Naive thymus-derived CD4-positive, alpha-beta T cell (primary cell): ENCODE measurements at regions of chr10 and their contacts with region 1.

Region 1: DNA sequence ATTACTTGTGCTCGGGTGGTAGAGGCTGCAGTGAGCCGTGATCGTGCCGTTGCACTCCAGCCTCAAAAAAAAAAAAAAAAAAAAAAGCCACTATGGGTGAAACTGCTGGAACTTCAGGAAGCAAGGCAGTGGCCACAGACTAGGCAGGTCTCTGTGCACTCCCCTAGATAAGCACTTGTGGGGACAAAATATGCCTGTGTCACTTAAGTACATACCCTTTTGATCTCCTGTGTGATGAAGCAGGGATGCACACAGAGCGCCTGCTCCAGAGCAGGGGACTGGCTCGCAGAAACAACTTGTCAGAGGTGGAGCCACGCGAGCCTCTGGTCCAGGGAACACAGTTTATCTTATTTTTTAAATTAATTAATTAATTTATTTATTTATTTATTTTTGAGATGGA is 42.9 kb upstream of the PSAP start:
- DNase-seq: no peak
- ATAC-seq: no peak
- H3K4me3 ChIP-seq: no peak overlapping the region
- H3K4me3 Mint-ChIP-seq: no peak overlapping the region
- H3K27ac ChIP-seq: no peak overlapping the region
- H3K27ac Mint-ChIP-seq: peak overlapping the region in 1 of 9 donors; percentile 78
- H3K4me1 ChIP-seq: peaks cover 0 to 11% of the 10 kb centered on the region in 2 donors
- H3K4me1 Mint-ChIP-seq: peaks cover 5 to 22% (median 11%) of the 10 kb centered on the region in 7 donors
- H3K27me3 ChIP-seq: no peaks in the 10 kb centered on the region
- H3K27me3 Mint-ChIP-seq: peaks cover 0 to 7% (median 0%) of the 10 kb centered on the region in 5 donors

Region 2: GRCh38 chr10:71314028-71314693 is 579.8 kb before region 1 on chr10:
- CTCF ChIA-PET with region 1: interaction called, 6 read pairs
- POLR2A ChIA-PET with region 1: no interaction called
- intact Hi-C with region 1: loop called (anchors 1 kb)
- DNase-seq: peak; percentile 18 to 56 (median 49)
- ATAC-seq: peak; percentile 62
- H3K4me3 ChIP-seq: no peak overlapping the region
- H3K4me3 Mint-ChIP-seq: peak overlapping the region in 3 of 10 donors; percentile 3 to 48 (median 25)
- H3K27ac ChIP-seq: no peak overlapping the region
- H3K27ac Mint-ChIP-seq: peak overlapping the region in 1 of 9 donors; percentile 55
- H3K4me1 ChIP-seq: peaks cover 5 to 6% of the 10 kb centered on the region in 2 donors
- H3K4me1 Mint-ChIP-seq: peaks cover 0 to 26% (median 13%) of the 10 kb centered on the region in 7 donors
- H3K27me3 ChIP-seq: no peaks in the 10 kb centered on the region
- H3K27me3 Mint-ChIP-seq: peaks cover 0 to 16% (median 14%) of the 10 kb centered on the region in 5 donors

Region 3: GRCh38 chr10:71782917-71783490 is 110.9 kb before region 1 on chr10:
- CTCF ChIA-PET with region 1: no interaction called
- POLR2A ChIA-PET with region 1: no interaction called
- intact Hi-C with region 1: no loop called
- DNase-seq: no peak
- ATAC-seq: peak; percentile 56
- H3K4me3 ChIP-seq: no peak overlapping the region
- H3K4me3 Mint-ChIP-seq: no peak overlapping the region
- H3K27ac ChIP-seq: no peak overlapping the region
- H3K27ac Mint-ChIP-seq: peak overlapping the region in 2 of 9 donors; percentile 21 to 39
- H3K4me1 ChIP-seq: no peaks in the 10 kb centered on the region
- H3K4me1 Mint-ChIP-seq: peaks cover 0 to 29% (median 5%) of the 10 kb centered on the region in 7 donors
- H3K27me3 ChIP-seq: no peaks in the 10 kb centered on the region
- H3K27me3 Mint-ChIP-seq: peaks cover 0 to 5% (median 0%) of the 10 kb centered on the region in 5 donors

Region 4: DNA sequence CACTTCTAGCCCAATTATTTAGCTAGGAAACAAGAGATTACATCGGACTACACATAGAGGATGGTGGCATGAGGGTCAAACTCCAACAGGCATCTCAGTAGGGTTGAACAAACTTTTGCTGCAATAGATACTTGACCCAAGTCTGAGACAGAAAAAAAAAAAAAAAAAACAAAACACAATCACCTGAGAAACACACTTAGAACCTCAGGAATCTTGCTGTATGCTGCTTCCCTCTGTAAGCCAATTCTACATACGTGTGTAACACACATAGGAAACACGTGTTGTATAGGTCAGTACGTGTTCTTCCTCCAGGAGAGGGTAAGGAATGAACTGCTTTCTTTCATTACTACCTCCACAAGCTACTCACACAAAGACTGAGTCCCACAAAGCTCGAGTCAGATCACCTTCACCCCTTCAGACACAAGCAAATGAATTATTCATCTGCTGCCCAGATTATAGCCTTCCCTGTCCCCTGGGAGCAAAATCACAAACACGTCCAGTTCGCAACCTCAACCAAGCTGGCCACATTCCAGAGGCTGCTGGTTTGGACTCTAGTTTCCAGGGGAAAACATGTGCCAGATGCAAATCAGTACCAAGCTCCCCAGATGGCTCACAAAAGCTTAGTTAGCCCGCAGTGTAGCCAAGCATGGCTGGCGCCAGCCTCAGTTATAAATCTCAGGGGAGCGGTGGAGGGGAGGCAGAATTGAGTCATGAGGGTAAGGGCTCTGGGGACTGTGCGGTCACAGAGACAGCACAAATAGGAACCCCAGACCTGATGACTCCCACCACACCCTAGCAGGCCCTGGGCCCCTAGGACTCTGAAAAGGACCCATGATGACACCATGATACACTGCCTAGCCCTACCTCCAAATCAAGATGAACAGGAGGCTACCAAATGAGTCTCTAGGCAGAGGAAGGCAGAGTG is 58.0 kb before region 1 on chr10:
- CTCF ChIA-PET with region 1: interaction called, 8 read pairs
- POLR2A ChIA-PET with region 1: no interaction called
- intact Hi-C with region 1: loop called (anchors 1 to 10 kb)
- DNase-seq: no peak
- ATAC-seq: peak; percentile 70
- H3K4me3 ChIP-seq: no peak overlapping the region
- H3K4me3 Mint-ChIP-seq: no peak overlapping the region
- H3K27ac ChIP-seq: no peak overlapping the region
- H3K27ac Mint-ChIP-seq: peak overlapping the region in 5 of 9 donors; percentile 22 to 78 (median 32)
- H3K4me1 ChIP-seq: peaks cover 5 to 12% of the 10 kb centered on the region in 2 donors
- H3K4me1 Mint-ChIP-seq: peaks cover 41 to 72% (median 56%) of the 10 kb centered on the region in 7 donors
- H3K27me3 ChIP-seq: no peaks in the 10 kb centered on the region
- H3K27me3 Mint-ChIP-seq: no peaks in the 10 kb centered on the region

Region 5: DNA sequence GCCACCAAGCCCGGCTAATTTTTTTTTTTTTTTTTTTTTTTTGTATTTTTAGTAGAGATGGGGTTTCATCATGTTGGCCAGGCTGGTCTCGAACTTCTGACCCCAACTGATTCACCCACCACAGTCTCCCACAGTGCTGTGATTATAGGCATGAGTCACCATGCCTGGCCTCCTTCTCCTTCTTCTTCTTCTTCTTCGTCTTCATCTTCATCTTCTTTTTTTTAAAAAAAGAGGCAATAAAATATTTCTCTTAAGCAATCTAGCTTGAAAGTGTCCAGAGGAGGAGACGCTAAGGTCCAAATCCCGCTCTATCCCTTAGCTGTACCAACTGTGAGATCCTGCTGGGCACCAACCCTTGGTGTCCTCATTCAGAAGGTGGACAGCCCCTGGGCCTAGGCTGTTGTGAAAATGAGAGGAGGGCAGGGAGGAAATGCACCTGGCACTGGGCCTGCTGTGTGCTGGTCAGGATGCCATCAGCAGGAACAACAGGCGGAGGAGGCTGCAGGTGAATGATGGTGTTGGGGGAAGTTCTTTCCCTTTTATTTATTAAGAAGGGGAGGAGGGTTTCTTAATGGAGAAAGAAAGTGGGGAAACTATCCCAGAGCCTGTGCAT is 29.0 kb before region 1 on chr10:
- CTCF ChIA-PET with region 1: no interaction called
- POLR2A ChIA-PET with region 1: no interaction called
- intact Hi-C with region 1: no loop called
- DNase-seq: no peak
- ATAC-seq: no peak
- H3K4me3 ChIP-seq: no peak overlapping the region
- H3K4me3 Mint-ChIP-seq: no peak overlapping the region
- H3K27ac ChIP-seq: no peak overlapping the region
- H3K27ac Mint-ChIP-seq: peak overlapping the region in 1 of 9 donors; percentile 25
- H3K4me1 ChIP-seq: no peaks in the 10 kb centered on the region
- H3K4me1 Mint-ChIP-seq: peaks cover 0 to 6% (median 0%) of the 10 kb centered on the region in 7 donors
- H3K27me3 ChIP-seq: no peaks in the 10 kb centered on the region
- H3K27me3 Mint-ChIP-seq: no peaks in the 10 kb centered on the region

Region 6: DNA sequence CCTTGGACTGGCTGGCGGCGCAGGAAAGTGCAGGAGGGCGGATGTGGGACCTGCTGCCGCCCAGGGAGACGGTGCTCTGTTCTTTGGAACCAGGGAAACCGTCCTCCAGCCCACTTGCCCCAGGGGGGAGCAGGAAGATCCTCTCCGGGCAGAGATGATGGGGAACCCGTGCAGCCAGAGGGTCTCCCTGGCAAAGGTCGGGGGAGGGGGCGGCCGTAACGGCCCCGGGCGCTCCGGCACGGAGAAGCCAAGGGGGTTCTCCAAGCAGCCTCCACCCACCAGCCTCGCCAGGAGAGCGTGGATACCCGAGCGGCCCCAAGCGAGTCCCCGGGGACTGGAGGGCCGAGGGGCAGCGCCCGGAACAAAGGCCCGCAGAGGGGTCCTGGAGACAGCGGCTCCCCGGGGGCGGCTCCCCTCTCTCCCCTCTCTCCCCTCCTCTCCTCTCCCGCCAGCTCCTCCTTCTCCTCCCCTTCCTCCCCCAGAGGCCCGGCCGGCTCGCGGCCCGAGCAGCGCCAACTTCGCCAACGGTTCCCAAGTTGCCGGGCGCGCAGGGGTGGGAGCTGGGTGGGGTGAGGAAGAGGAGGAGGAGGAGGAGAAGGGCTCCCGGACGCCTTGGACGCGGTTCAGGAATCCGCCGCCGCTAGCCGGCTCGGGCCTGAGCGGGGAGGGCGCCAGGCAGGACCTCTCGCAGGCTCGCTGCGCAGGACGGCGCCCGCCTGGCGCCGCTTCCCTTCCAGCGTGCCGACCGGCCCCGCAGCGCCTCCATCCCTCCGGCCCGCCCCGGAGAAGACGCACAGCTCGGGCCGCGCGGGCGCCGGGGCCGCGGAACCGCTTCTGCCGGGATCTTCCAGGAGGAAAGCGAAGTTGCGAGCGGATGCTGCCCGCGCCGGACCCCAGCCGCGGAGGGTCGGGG is 70.1 kb after region 1 on chr10 and contains the start of gene CHST3:
- CTCF ChIA-PET with region 1: interaction called, 8 read pairs
- POLR2A ChIA-PET with region 1: no interaction called
- intact Hi-C with region 1: loop called in 1 of 2 experiments (anchors 1 kb)
- DNase-seq: peak in 3 of 9 donors; percentile 2 to 33 (median 5)
- ATAC-seq: no peak
- H3K4me3 ChIP-seq: peak within 1 kb of the TSS; percentile 43
- H3K4me3 Mint-ChIP-seq: peak within 1 kb of the TSS; percentile 75 to 89 (median 82)
- H3K27ac ChIP-seq: no peak within 1 kb of the TSS
- H3K27ac Mint-ChIP-seq: peak within 1 kb of the TSS in 3 of 9 donors; percentile 11 to 36 (median 13)
- H3K4me1 ChIP-seq: peaks cover 0 to 8% of the 10 kb centered on the region in 2 donors
- H3K4me1 Mint-ChIP-seq: peaks cover 7 to 15% (median 8%) of the 10 kb centered on the region in 7 donors
- H3K27me3 ChIP-seq: peaks cover 0 to 4% of the 10 kb centered on the region in 2 donors
- H3K27me3 Mint-ChIP-seq: peaks cover 32 to 71% (median 39%) of the 10 kb centered on the region in 5 donors
- total RNA-seq, gene CHST3: 0.05 TPM in 1 of 5 experiments, not detected in the others

Region 7: GRCh38 chr10:72069751-72070526 is 176.0 kb after region 1 on chr10:
- CTCF ChIA-PET with region 1: no interaction called
- POLR2A ChIA-PET with region 1: no interaction called
- intact Hi-C with region 1: no loop called
- DNase-seq: no peak
- ATAC-seq: no peak
- H3K4me3 ChIP-seq: no peak overlapping the region
- H3K4me3 Mint-ChIP-seq: peak overlapping the region in 5 of 10 donors; percentile 32 to 67 (median 35)
- H3K27ac ChIP-seq: peak overlapping the region; percentile 39
- H3K27ac Mint-ChIP-seq: peak overlapping the region; percentile 5 to 95 (median 82)
- H3K4me1 ChIP-seq: peaks cover 16 to 21% of the 10 kb centered on the region in 2 donors
- H3K4me1 Mint-ChIP-seq: peaks cover 20 to 57% (median 43%) of the 10 kb centered on the region in 7 donors
- H3K27me3 ChIP-seq: no peaks in the 10 kb centered on the region
- H3K27me3 Mint-ChIP-seq: no peaks in the 10 kb centered on the region

Region 8: DNA sequence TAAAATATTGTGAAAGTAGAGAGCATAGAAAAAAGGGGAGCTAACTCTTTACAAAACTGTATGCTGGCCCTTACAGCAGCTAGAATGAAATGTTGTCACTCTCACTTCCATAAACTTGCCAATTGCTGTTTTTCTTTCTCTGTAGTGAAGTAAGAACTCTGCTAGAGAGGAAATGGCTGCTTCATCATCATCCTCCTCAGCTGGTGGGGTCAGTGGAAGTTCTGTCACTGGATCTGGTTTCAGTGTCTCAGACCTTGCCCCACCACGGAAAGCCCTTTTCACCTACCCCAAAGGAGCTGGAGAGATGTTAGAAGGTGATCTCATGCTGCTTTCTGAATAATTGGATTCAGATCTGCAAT is 329.8 kb after region 1 on chr10:
- CTCF ChIA-PET with region 1: interaction called, 5 read pairs
- POLR2A ChIA-PET with region 1: no interaction called
- intact Hi-C with region 1: loop called (anchors 1 to 2 kb)
- DNase-seq: no peak
- ATAC-seq: peak; percentile 37
- H3K4me3 ChIP-seq: no peak overlapping the region
- H3K4me3 Mint-ChIP-seq: peak overlapping the region in 8 of 10 donors; percentile 43 to 81 (median 56)
- H3K27ac ChIP-seq: peak overlapping the region; percentile 43
- H3K27ac Mint-ChIP-seq: peak overlapping the region; percentile 35 to 89 (median 72)
- H3K4me1 ChIP-seq: peaks cover 9 to 48% of the 10 kb centered on the region in 2 donors
- H3K4me1 Mint-ChIP-seq: peaks cover 43 to 68% (median 57%) of the 10 kb centered on the region in 7 donors
- H3K27me3 ChIP-seq: no peaks in the 10 kb centered on the region
- H3K27me3 Mint-ChIP-seq: no peaks in the 10 kb centered on the region